ENCODE measurements at regions of chr1 and their contacts with region 1.

Region 1: DNA sequence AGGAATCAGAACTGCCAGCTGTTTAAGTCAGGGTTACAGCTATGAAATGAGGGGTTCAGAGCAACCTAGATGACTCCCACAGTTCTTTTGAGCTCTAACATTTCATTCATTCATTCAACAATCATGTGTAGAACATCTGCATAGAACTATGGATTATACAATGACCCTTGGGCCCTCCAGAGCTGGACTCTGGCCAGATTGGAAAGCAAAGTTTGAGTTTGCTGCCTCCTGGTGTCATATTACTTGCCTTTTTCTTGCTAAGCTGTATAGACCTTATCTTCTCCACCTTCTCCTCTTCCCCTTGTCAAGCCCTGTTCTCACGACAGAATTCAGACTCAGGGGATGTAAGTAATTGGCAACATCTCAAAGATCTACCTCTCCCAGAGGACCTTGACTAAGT is 4.0 kb downstream of the CASQ2 start:
- DNase-seq: no peak
- ATAC-seq: no peak
- H3K4me3 Mint-ChIP-seq: no peak overlapping the region
- H3K27ac Mint-ChIP-seq: no peak overlapping the region
- H3K4me1 Mint-ChIP-seq: no peaks in the 10 kb centered on the region
- H3K27me3 Mint-ChIP-seq: peaks cover 4% of the 10 kb centered on the region
- CTCF ChIP-seq: no peak

Region 2: DNA sequence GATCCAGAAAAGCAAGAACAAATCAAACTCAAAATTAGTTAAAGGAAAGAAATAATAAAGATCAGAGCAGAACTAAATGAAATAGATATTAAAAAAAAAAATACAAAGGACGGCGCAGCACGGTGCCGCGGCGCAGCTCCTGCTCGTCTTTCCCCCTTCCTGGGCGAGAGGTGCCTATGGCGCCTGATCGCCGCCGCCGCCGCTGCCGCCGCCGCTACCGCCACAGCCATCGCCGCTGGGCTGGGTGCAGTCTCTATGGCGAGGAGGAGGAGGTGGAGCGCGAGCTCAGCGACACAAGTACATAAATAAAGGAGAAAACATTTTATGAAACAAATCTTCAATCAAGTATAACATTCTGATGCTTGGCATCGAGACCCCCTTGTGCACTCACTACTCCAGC is 200.3 kb before region 1 on chr1:
- CTCF ChIA-PET with region 1: no interaction called
- POLR2A ChIA-PET with region 1: no interaction called
- intact Hi-C with region 1: no loop called
- DNase-seq: no peak
- ATAC-seq: no peak
- H3K4me3 Mint-ChIP-seq: no peak overlapping the region
- H3K27ac Mint-ChIP-seq: no peak overlapping the region
- H3K4me1 Mint-ChIP-seq: no peaks in the 10 kb centered on the region
- H3K27me3 Mint-ChIP-seq: peaks cover 15% of the 10 kb centered on the region
- CTCF ChIP-seq: no peak

Region 3: GRCh38 chr1:115609021-115609420 is 155.5 kb before region 1 on chr1:
- CTCF ChIA-PET with region 1: interaction called, 10 read pairs
- POLR2A ChIA-PET with region 1: no interaction called
- intact Hi-C with region 1: no loop called
- DNase-seq: no peak
- ATAC-seq: no peak
- H3K4me3 Mint-ChIP-seq: no peak overlapping the region
- H3K27ac Mint-ChIP-seq: no peak overlapping the region
- H3K4me1 Mint-ChIP-seq: no peaks in the 10 kb centered on the region
- H3K27me3 Mint-ChIP-seq: peaks cover 1% of the 10 kb centered on the region
- CTCF ChIP-seq: no peak